A673 (cell line): ENCODE measurements at regions of chrX and their contacts with region 1.

Region 1: DNA sequence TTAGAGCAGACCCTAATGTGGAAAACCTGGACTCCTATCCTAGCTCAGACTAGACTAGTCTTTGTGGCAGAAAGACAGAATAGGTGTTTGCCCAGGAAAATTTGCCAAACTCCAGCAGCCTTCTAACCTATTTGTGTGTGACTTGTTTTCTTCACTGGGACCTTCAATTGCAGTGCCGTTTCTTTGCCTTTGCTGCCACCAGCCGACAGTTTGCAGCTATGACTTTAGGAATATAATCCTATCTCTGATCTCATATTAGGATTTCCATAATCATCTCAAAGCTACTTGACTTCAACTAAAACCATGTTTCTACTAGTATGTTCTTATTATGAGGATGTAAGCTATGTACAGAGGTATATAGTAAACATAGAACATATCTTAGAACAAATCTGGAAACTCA is 60.2 kb upstream of the PGAM4 start:
- DNase-seq: peak; percentile 54
- H3K4me3 ChIP-seq: no peak overlapping the region
- H3K27ac ChIP-seq: no peak overlapping the region
- H3K4me1 ChIP-seq: no peaks in the 10 kb centered on the region
- H3K27me3 ChIP-seq: no peaks in the 10 kb centered on the region
- CTCF ChIP-seq: peak; percentile 76

Region 2: DNA sequence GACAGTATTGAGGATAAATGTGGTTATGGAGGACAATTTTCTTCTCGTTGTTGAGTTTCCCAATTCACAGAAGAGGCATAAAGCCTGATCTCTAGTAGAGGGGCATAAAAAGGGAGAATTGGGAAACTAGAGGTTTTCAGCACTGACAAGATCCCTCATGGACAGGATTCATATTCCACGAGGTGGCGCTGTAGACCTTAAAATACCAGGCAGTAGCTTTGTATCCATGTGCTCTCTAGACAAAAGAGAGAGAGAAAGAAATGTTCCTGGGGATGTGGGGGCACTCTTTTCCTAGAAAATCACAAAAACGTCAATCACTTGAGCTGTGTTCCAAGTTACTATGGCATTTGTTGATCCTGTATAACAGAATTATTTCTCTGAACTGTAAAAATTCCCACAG is 1473.8 kb before region 1 on chrX:
- CTCF ChIA-PET with region 1: no interaction called
- POLR2A ChIA-PET with region 1: no interaction called
- intact Hi-C with region 1: loop called (anchors 5 kb)
- DNase-seq: peak; percentile 58
- H3K4me3 ChIP-seq: no peak overlapping the region
- H3K27ac ChIP-seq: no peak overlapping the region
- H3K4me1 ChIP-seq: no peaks in the 10 kb centered on the region
- H3K27me3 ChIP-seq: no peaks in the 10 kb centered on the region
- CTCF ChIP-seq: peak; percentile 45

Region 3: DNA sequence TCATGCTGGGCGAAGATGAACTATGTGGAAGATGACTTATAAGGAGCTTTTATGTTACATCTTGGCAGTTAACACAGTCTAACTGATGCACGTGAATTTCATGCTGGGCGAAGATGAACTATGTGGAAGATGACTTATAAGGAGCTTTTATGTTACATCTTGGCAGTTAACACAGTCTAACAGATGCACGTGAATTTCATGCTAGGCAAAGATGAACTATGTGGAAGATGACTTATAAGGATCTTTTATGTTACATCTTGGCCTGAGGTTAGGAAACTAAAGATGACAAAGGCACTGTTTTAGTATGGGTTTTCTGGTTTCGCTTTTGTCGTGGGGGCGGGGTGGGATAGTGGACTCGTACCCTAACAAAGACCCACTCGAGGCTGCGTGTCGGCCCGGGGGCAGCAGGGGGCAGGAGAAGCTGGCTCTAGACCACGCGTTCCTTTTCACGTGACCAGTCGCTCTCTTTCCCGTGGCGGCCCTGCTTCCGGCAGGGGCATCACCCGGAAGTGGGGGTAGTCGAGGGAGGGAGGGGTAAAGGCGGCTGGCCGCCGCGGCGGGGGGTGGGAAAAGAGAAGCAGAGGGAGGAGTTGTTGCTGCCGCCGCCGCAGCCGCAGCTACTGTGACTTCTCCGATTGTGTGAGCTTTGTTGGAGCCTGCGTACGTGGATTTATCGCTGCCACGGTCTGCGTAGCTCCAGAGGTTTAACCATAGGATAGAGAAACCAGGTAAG is 119.4 kb before region 1 on chrX and contains the start of gene ATP7A:
- CTCF ChIA-PET with region 1: no interaction called
- POLR2A ChIA-PET with region 1: no interaction called
- intact Hi-C with region 1: loop called (anchors 1 kb)
- DNase-seq: peak; percentile 93
- H3K4me3 ChIP-seq: peak within 1 kb of the TSS; percentile 60
- H3K27ac ChIP-seq: peak within 1 kb of the TSS; percentile 68
- H3K4me1 ChIP-seq: no peaks in the 10 kb centered on the region
- H3K27me3 ChIP-seq: no peaks in the 10 kb centered on the region
- CTCF ChIP-seq: peak; percentile 53
- total RNA-seq, gene ATP7A: 9.0 TPM in 2 replicates